ENCODE measurements at regions of chr20 and their contacts with region 1.

Region 1: DNA sequence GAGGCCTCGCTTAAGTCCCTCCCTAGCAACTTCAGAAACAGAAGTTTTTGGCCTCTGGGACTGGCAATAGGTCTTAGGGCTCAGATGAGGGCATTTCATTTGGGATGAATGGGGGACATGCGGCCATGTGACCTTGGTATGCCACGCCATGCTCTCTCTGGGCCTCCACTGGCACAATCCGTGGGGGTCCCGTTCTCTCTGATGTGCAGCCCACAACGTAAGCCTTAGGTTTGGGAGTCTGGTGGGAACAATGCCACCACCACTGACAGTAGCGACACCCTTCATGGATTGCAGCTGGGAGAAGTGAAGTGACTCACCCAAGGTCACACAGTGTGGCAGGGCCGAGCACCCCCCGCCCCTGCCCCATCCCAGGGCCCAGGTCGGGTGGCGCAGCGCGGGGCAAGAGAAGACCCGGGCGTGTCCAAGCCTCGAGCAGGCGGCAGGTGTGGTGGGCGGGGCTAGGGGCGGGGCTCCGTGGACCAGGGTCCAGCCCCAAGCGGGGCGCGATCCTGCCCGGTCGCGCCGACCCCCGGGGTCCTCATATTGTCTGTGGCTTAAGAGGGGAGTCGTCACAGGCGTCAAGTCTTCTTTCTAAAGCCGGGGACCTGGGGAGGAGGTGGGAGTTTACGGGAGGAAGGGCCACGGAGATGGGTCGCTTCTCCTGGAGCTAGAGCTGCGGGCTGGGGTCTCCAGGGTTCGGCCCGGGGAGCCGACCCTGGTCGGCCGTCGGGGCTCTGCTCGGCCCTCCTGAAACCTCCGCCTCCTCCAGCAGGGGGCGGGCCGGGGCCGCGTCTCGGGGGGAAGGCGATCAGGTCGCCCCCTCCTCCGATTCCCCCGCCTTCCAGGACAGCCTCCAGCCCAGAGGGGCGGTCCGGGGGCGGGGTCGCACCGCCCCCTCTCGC is 698 bp upstream of the CEBPB start:
- DNase-seq: peak; percentile 70 to 95
- H3K4me3 ChIP-seq: peak overlapping the region; percentile 88; the same call in 1 of the 2 replicates
- H3K27ac ChIP-seq: peak overlapping the region; percentile 99
- H3K4me1 ChIP-seq: peaks cover 44% of the 10 kb centered on the region
- H3K27me3 ChIP-seq: no peaks in the 10 kb centered on the region
- CTCF ChIP-seq: peak; percentile 86

Region 2: DNA sequence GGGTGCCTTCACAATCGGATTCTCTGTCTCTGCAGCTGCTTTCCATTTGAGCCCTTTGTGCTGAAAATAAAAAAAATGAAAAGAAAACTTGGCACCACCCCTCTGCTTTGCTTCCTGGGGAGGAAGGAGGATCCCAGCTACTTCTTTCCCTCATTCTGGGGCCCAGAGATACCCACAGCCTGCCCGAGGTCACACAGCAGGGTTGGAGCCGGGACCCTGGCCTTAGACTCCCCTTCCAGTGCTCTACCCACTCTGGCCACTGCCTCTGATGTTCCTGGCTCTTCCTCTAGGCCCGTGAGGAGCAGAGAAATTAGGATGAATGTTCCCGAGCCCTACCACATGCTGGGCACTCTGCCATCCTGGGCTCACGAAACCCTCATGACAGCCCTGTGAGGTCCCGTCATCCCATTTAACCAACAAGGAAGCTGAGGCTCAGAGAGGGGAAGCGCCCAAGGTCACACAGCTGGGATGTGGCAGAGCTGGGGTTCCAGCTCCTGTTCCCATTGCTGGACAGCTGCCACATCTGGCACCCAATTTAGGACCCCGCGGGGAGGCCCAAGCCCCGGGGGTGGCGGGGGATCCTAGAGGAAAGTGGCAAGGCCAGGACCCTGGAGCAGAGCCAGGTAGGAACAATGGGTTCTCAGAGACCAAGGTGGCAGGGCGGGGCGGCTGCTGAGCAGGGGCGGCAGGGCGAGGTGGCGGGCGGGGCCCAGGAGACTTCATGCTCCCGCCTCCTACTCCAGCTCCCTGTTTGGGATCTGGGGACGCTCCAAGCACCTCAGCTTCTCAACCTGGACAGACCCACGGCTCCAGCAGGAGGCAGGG is 77.3 kb after region 1 on chr20:
- CTCF ChIA-PET with region 1: interaction called, 6 read pairs
- POLR2A ChIA-PET with region 1: no interaction called
- intact Hi-C with region 1: loop called (anchors 1 kb)
- DNase-seq: peak; percentile 90 to 93
- H3K4me3 ChIP-seq: no peak overlapping the region; the same call in 1 of the 2 replicates
- H3K27ac ChIP-seq: peak overlapping the region; percentile 84
- H3K4me1 ChIP-seq: peaks cover 45% of the 10 kb centered on the region
- H3K27me3 ChIP-seq: no peaks in the 10 kb centered on the region
- CTCF ChIP-seq: peak; percentile 52; the same call in 1 of the 2 replicates

Region 3: DNA sequence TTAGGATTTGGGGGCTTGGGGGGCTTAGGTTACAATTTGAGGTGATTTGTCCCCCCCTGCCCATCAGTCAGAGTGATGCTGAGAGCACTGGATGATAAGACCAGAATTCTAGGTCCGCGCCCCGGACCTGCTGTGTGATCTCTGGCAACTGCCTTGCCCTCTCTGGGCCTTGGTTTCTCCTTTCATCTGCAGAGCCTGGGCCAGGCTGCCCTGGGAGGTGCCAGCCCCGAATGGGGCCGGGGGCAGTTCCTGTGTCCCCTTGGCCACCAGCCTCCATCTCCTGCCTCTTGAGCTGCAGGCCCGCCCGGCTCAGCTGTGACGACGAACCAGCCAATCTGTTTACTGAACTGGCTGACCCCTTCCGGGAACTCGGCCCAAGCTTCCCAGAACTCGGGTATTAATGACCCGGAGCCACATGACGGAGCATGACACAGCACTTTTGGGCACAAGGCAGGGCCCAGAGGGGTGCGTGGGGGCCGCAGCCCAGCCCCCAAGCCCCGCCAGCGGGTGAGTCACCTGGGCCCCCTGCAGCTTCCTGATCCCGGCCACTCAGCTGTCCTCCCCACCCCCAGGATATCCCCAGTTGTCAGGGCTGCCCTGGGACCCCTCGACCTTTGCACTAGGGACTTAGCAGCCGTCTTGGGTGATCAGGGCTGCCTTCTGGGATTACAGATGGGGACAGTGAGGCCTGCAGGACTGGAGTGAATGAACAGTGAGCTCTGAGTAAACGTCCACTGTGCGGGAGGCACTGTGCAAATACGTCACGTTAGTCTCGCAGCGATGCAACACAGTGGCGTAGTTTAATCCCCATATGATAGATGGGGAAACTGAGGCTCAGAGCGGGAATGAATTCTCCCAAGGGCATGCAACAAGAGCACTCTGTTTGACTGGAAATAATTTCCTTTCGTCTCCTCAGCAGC is 102.7 kb after region 1 on chr20:
- CTCF ChIA-PET with region 1: interaction called, 11 read pairs
- POLR2A ChIA-PET with region 1: interaction called, 5 read pairs
- intact Hi-C with region 1: loop called (anchors 2 kb)
- DNase-seq: peak; percentile 86 to 92
- H3K4me3 ChIP-seq: no peak overlapping the region; the same call in 1 of the 2 replicates
- H3K27ac ChIP-seq: peak overlapping the region; percentile 86
- H3K4me1 ChIP-seq: peaks cover 46% of the 10 kb centered on the region
- H3K27me3 ChIP-seq: no peaks in the 10 kb centered on the region
- CTCF ChIP-seq: no peak

Region 4: DNA sequence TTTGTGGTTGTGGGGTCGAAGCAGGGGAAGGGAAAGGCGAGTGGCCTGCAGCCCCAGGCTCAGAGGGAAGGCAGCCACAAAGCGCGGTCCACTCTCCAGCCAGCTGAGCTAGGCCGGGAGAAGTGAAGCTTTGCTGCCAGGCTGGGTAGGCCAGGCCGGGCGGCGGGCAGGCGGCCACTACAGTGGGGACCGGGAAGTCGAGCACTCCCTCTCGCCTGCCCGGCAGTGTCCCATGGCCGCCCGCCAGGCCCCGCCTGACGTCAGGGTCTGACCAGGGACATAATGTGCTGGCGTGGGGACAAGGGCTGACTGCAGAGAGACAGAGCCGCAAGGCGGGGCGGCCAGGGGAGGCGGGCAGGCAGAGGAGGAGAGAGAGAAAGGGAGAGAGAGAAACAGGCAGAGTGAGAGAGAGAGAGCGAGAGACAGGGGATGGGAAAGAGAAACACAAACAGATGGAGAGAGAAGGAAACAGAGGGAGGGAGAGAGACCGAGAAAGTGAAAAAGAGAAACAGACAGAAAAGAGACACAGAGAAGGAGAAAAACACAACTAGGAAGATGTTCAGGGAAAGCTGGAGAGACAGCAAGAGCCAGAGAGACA is 225.7 kb after region 1 on chr20:
- CTCF ChIA-PET with region 1: no interaction called
- POLR2A ChIA-PET with region 1: no interaction called
- intact Hi-C with region 1: loop called (anchors 2 kb)
- DNase-seq: peak; percentile 85 to 97
- H3K4me3 ChIP-seq: peak overlapping the region; percentile 27; the same call in 1 of the 2 replicates
- H3K27ac ChIP-seq: peak overlapping the region; percentile 90
- H3K4me1 ChIP-seq: peaks cover 64% of the 10 kb centered on the region
- H3K27me3 ChIP-seq: no peaks in the 10 kb centered on the region
- CTCF ChIP-seq: no peak; the same call in 1 of the 2 replicates

Region 5: DNA sequence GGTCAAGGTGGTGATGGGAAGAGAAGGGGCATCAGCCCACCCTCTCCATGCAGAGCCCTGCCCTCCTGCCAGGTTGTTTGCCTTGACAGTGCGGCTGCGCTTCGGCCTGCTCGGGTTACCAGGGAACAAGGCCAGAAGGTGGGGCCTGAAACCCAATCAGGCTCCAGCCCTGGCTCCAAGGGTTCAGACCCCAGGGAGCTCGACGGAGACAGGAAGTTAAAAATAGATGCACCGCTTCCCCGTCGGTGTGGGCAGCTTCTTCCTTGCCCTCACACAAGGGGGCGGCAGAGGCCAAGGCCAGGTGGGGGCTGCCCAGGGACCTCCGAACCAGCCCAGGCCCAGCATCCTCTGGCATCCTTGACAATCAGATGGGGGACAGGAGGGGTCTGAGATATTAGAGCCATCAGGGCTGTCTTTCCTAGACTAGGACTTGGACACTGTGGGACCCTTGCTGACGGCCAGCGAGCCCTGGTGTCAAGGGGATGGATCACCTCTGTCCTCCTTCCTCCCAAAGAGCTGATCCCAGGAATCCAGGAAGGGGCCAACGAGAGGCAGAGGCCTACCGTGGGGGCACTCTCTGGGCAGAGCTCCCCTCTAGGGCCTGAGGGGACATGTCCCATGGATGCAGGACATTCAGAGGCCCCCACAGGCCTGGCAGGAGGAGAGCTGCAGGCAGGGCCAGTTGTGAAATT is 436.2 kb after region 1 on chr20:
- CTCF ChIA-PET with region 1: no interaction called
- POLR2A ChIA-PET with region 1: no interaction called
- intact Hi-C with region 1: loop called (anchors 1 kb)
- DNase-seq: peak in 1 of 2 experiments; percentile 65
- H3K4me3 ChIP-seq: no peak overlapping the region
- H3K27ac ChIP-seq: no peak overlapping the region
- H3K4me1 ChIP-seq: peaks cover 45% of the 10 kb centered on the region
- H3K27me3 ChIP-seq: no peaks in the 10 kb centered on the region
- CTCF ChIP-seq: peak; percentile 72